ENCODE measurements at regions of chr7 and their contacts with region 1.

Region 1: GRCh38 chr7:139075031-139075652 is 34.4 kb downstream of the ZC3HAV1 start:
- DNase-seq: peak; percentile 64 to 77
- H3K4me3 ChIP-seq: no peak overlapping the region
- H3K4me3 Mint-ChIP-seq: no peak overlapping the region
- H3K27ac Mint-ChIP-seq: no peak overlapping the region
- H3K4me1 ChIP-seq: no peaks in the 10 kb centered on the region
- H3K4me1 Mint-ChIP-seq: no peaks in the 10 kb centered on the region
- H3K27me3 ChIP-seq: no peaks in the 10 kb centered on the region
- H3K27me3 Mint-ChIP-seq: no peaks in the 10 kb centered on the region
- CTCF ChIP-seq: peak; percentile 77 to 79

Region 2: GRCh38 chr7:138886501-138886917 is 188.6 kb before region 1 on chr7:
- CTCF ChIA-PET with region 1: interaction called, 18 read pairs
- POLR2A ChIA-PET with region 1: no interaction called
- intact Hi-C with region 1: loop called (anchors 1 kb)
- DNase-seq: peak in 1 of 2 experiments; percentile 55
- H3K4me3 ChIP-seq: no peak overlapping the region
- H3K4me3 Mint-ChIP-seq: no peak overlapping the region
- H3K27ac Mint-ChIP-seq: no peak overlapping the region
- H3K4me1 ChIP-seq: peaks cover 10% of the 10 kb centered on the region
- H3K4me1 Mint-ChIP-seq: peaks cover 17% of the 10 kb centered on the region
- H3K27me3 ChIP-seq: no peaks in the 10 kb centered on the region
- H3K27me3 Mint-ChIP-seq: no peaks in the 10 kb centered on the region
- CTCF ChIP-seq: peak; percentile 54 to 60

Region 3: DNA sequence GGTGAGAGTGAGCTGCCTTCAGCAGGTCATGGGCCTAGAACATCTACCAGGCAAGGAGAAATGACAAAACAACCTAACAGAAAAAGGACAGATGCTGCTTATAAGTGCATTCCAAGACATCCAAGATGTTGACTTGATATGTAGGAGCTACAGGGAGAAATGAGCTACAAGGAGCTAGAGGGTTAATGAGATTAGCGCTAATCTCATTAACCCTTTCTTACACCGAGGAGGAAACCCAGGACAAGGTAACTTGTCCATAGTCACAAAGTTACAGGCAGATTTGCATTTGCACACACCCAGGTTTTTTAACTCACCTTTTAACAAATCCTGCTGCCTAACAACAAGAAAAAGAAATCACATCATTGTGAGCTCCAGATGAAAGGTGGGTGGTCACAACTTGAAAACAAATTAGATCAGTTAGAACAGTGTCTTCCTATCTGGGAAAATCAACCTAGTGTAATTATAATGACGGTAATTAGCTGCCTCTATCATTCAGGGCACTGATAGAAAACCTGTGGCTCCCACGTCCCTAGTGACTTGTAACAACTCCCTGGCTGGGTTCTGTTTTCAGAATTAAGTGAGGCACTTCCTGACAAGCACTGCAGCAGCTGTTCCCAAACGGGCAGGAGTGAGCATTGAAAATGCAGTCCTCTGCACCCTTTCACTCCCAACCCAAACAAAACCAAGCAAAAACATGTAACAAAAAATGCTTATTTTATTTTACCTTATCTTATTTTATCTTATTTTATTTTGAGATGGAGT is 99.6 kb before region 1 on chr7:
- CTCF ChIA-PET with region 1: no interaction called
- POLR2A ChIA-PET with region 1: no interaction called
- intact Hi-C with region 1: no loop called
- DNase-seq: no peak
- H3K4me3 ChIP-seq: no peak overlapping the region
- H3K4me3 Mint-ChIP-seq: no peak overlapping the region
- H3K27ac Mint-ChIP-seq: no peak overlapping the region
- H3K4me1 ChIP-seq: peaks cover 19% of the 10 kb centered on the region
- H3K4me1 Mint-ChIP-seq: peaks cover 12% of the 10 kb centered on the region
- H3K27me3 ChIP-seq: no peaks in the 10 kb centered on the region
- H3K27me3 Mint-ChIP-seq: no peaks in the 10 kb centered on the region
- CTCF ChIP-seq: no peak

Region 4: GRCh38 chr7:139016931-139017511 is 58.1 kb before region 1 on chr7:
- CTCF ChIA-PET with region 1: interaction called, 17 read pairs
- POLR2A ChIA-PET with region 1: no interaction called
- intact Hi-C with region 1: loop called (anchors 1 kb)
- DNase-seq: peak; percentile 71 to 74
- H3K4me3 ChIP-seq: no peak overlapping the region
- H3K4me3 Mint-ChIP-seq: no peak overlapping the region
- H3K27ac Mint-ChIP-seq: no peak overlapping the region
- H3K4me1 ChIP-seq: 0 out of 2 replicates have a peak, but pooled peaks cover 2% of the 10 kb centered on the region
- H3K4me1 Mint-ChIP-seq: peaks cover 7% of the 10 kb centered on the region
- H3K27me3 ChIP-seq: no peaks in the 10 kb centered on the region
- H3K27me3 Mint-ChIP-seq: no peaks in the 10 kb centered on the region
- CTCF ChIP-seq: peak; percentile 55 to 75

Region 5: GRCh38 chr7:139109188-139109982 is 34.2 kb after region 1 on chr7 and contains the start of gene ZC3HAV1:
- CTCF ChIA-PET with region 1: no interaction called
- POLR2A ChIA-PET with region 1: no interaction called
- intact Hi-C with region 1: loop called (anchors 2 kb)
- DNase-seq: peak; percentile 88 to 90
- H3K4me3 ChIP-seq: peak within 1 kb of the TSS; percentile 57
- H3K4me3 Mint-ChIP-seq: peak within 1 kb of the TSS; percentile 85
- H3K27ac Mint-ChIP-seq: peak within 1 kb of the TSS; percentile 55
- H3K4me1 ChIP-seq: peaks cover 8% of the 10 kb centered on the region
- H3K4me1 Mint-ChIP-seq: peaks cover 6% of the 10 kb centered on the region
- H3K27me3 ChIP-seq: no peaks in the 10 kb centered on the region
- H3K27me3 Mint-ChIP-seq: no peaks in the 10 kb centered on the region
- CTCF ChIP-seq: peak; percentile 21 to 42
- total RNA-seq, gene ZC3HAV1: 30.8 and 30.9 TPM in 2 replicates

Region 6: DNA sequence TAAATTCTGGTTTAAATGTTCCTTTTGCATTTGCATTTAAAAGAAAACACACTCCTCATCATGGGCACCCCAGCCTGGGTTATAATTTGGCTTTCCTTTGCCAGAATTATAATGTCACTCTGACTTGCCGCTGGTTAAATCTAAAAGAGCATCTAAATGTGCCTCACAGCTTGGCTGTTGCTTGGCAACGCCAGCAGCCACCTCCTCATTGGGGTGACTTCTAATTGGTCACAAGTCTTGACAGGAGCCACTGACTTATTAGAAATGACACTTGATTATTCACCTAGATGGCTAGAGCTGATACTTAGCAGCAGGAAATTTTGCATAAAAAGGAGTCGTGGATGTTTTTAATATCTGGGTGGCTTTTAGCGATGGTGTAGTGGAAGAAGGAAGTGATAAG is 868.3 kb after region 1 on chr7:
- CTCF ChIA-PET with region 1: no interaction called
- POLR2A ChIA-PET with region 1: no interaction called
- intact Hi-C with region 1: no loop called
- DNase-seq: no peak
- H3K4me3 ChIP-seq: no peak overlapping the region
- H3K4me3 Mint-ChIP-seq: no peak overlapping the region
- H3K27ac Mint-ChIP-seq: no peak overlapping the region
- H3K4me1 ChIP-seq: no peaks in the 10 kb centered on the region
- H3K4me1 Mint-ChIP-seq: no peaks in the 10 kb centered on the region
- H3K27me3 ChIP-seq: no peaks in the 10 kb centered on the region; the same call in 1 of the 2 replicates
- H3K27me3 Mint-ChIP-seq: peaks cover 14% of the 10 kb centered on the region
- CTCF ChIP-seq: no peak